Gastrocnemius medialis (tissue), 4 donors: ENCODE measurements at regions of chr2 and their contacts with region 1.

Region 1: GRCh38 chr2:15560988-15561573 is at the start of gene NBAS:
- DNase-seq: peak; percentile 59 to 83
- ATAC-seq: peak; percentile 95 to 96
- H3K4me3 ChIP-seq: peak within 1 kb of the TSS; percentile 80 to 95 (median 82)
- H3K27ac ChIP-seq: peak within 1 kb of the TSS; percentile 84 to 89 (median 84)
- H3K4me1 ChIP-seq: peaks cover 23 to 27% of the 10 kb centered on the region in 2 donors
- H3K27me3 ChIP-seq: no peaks in the 10 kb centered on the region
- CTCF ChIP-seq: peak in 1 of 5 experiments; percentile 11
- POLR2A ChIP-seq: peak in 1 of 2 donors; percentile 31
- total RNA-seq, gene NBAS: 27.3 to 43.6 (median 28.4) TPM

Region 2: DNA sequence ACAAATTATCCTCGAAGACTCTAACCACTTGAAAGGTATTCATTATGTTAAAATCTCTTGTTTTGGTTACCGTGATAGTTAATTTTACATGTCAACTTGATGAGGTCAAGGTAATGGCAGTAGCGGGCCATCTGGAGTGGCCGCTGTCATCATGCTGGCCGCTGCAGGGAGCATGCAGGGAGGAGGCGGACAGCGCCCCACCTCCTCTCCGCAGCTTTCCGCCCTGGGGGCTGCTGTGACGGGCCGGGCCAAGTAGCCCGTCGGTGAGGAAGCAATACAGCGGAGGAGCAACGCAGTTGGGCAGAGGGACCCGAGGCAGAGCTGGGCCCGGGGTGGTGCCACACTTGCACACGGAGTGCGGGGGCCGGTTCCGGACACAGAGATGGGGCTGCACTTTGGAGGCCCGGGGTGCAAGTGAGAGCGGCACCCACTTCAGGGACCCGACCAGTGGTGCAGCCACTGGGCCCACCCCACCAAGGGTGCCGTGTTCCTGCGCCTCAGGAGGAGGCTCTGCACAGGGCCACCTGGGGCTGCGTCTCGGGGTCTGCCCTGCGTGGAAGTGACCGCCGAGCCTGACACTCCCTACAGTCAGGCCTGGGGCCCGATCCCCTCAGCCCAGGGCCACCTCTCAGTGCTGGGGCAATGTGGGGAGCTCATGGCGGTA is 476.1 kb before region 1 on chr2:
- in situ Hi-C with region 1: no loop called
- intact Hi-C with region 1: no loop called
- DNase-seq: no peak
- ATAC-seq: no peak
- H3K4me3 ChIP-seq: no peak overlapping the region
- H3K27ac ChIP-seq: no peak overlapping the region
- H3K4me1 ChIP-seq: no peaks in the 10 kb centered on the region
- H3K27me3 ChIP-seq: no peaks in the 10 kb centered on the region
- CTCF ChIP-seq: no peak
- POLR2A ChIP-seq: no peak

Region 3: GRCh38 chr2:15449556-15450236 is 111.4 kb before region 1 on chr2:
- in situ Hi-C with region 1: no loop called
- intact Hi-C with region 1: loop called (anchors 5 kb)
- DNase-seq: no peak
- ATAC-seq: peak; percentile 77 to 89
- H3K4me3 ChIP-seq: no peak overlapping the region
- H3K27ac ChIP-seq: peak overlapping the region; percentile 71 to 78 (median 76)
- H3K4me1 ChIP-seq: peaks cover 16 to 31% of the 10 kb centered on the region in 2 donors
- H3K27me3 ChIP-seq: no peaks in the 10 kb centered on the region
- CTCF ChIP-seq: no peak
- POLR2A ChIP-seq: no peak

Region 4: DNA sequence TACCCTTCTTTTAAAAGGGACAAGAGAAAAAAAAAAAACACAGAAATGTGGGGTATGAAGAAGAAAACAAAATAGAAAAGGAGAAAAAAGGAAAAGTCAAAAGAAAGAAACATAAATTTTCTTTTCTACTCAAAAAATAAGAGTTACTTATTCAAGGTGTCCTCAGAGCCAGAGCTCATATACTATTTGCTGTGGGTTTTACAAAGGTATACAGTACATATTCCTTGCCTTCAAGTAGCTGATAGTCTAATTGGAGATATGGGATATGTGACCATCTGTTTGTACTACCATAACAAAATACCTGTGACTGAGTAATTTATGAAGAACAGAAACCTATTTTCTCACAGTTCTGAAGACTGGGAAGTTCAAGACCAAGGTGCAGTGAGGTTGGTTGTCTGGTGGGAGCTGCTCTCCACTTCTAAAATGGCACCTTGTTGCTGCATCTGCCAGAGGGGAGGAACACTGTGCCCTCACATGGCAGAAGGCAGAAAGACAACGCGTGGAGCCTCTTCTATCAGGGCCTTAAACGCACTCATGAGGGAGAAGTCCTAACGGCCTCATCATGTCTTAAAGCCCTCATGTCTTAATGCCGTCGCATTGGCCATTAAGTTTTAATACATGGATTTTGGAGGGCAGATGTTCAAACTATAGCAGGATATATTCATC is 33.9 kb before region 1 on chr2:
- in situ Hi-C with region 1: no loop called
- intact Hi-C with region 1: no loop called
- DNase-seq: no peak
- ATAC-seq: no peak
- H3K4me3 ChIP-seq: no peak overlapping the region
- H3K27ac ChIP-seq: no peak overlapping the region
- H3K4me1 ChIP-seq: no peaks in the 10 kb centered on the region
- H3K27me3 ChIP-seq: no peaks in the 10 kb centered on the region
- CTCF ChIP-seq: no peak
- POLR2A ChIP-seq: no peak

Region 5: GRCh38 chr2:15591692-15592463 is 30.8 kb after region 1 on chr2 and contains the start of gene DDX1:
- in situ Hi-C with region 1: no loop called
- intact Hi-C with region 1: loop called (anchors 1 kb)
- DNase-seq: peak; percentile 71 to 77
- ATAC-seq: peak; percentile 89 to 96
- H3K4me3 ChIP-seq: peak within 1 kb of the TSS; percentile 84 to 96 (median 94)
- H3K27ac ChIP-seq: peak within 1 kb of the TSS; percentile 89 to 96 (median 93)
- H3K4me1 ChIP-seq: peaks cover 21 to 27% of the 10 kb centered on the region in 2 donors
- H3K27me3 ChIP-seq: no peaks in the 10 kb centered on the region
- CTCF ChIP-seq: no peak
- POLR2A ChIP-seq: peak; percentile 60 to 71
- total RNA-seq, gene DDX1: 72.8 to 108 (median 88.6) TPM